ENCODE measurements at regions of chr2 and their contacts with region 1.

Region 1: GRCh38 chr2:237572021-237572741 is 5.8 kb downstream of the PRLH start:
- DNase-seq: peak; percentile 73 to 80 (median 77)
- H3K4me3 ChIP-seq: no peak overlapping the region
- H3K4me3 Mint-ChIP-seq: no peak overlapping the region
- H3K27ac ChIP-seq: no peak overlapping the region
- H3K27ac Mint-ChIP-seq: peak overlapping the region in 1 of 7 donors; percentile 53
- H3K4me1 ChIP-seq: no peaks in the 10 kb centered on the region
- H3K4me1 Mint-ChIP-seq: peaks cover 0 to 6% (median 3%) of the 10 kb centered on the region in 4 donors
- H3K27me3 ChIP-seq: no peaks in the 10 kb centered on the region
- H3K27me3 Mint-ChIP-seq: peaks cover 4 to 6% of the 10 kb centered on the region in 2 donors

Region 2: GRCh38 chr2:236343400-236344161 is 1228.6 kb before region 1 on chr2:
- CTCF ChIA-PET with region 1: no interaction called
- POLR2A ChIA-PET with region 1: no interaction called
- intact Hi-C with region 1: loop called (anchors 10 kb)
- DNase-seq: peak; percentile 41 to 60 (median 57)
- H3K4me3 ChIP-seq: no peak overlapping the region
- H3K4me3 Mint-ChIP-seq: no peak overlapping the region
- H3K27ac ChIP-seq: no peak overlapping the region
- H3K27ac Mint-ChIP-seq: no peak overlapping the region
- H3K4me1 ChIP-seq: no peaks in the 10 kb centered on the region
- H3K4me1 Mint-ChIP-seq: peaks cover 0 to 4% (median 0%) of the 10 kb centered on the region in 4 donors
- H3K27me3 ChIP-seq: no peaks in the 10 kb centered on the region
- H3K27me3 Mint-ChIP-seq: peaks cover 0 to 17% of the 10 kb centered on the region in 2 donors

Region 3: DNA sequence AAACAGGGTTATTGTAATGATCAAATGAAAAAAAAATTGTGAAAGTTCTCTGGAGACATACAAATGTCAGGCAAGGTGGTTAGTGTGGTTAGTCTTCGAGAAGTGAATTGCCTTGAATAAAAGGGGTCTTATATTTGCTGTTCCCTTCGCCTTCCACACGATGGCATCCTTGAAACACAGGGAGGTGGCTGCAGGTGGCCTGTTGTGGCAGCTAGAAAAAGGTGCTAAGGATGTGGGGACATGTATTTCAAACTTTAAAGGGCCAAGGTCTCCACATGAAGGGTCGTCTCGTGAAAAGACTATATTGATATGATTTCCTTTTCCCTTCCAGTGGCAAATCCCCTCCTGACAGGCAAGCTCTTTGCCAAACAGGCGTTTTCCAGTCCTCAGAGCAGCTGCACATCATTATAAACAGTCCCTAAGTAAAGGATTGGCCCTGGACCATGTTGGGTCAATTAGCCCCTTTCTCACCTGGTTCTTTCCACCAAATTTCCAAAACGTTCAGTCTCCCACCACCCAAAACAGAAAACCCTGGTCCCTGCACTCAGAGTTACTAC is 418.0 kb before region 1 on chr2:
- CTCF ChIA-PET with region 1: interaction called, 32 read pairs
- POLR2A ChIA-PET with region 1: no interaction called
- intact Hi-C with region 1: no loop called
- DNase-seq: peak; percentile 48 to 59 (median 57)
- H3K4me3 ChIP-seq: no peak overlapping the region
- H3K4me3 Mint-ChIP-seq: no peak overlapping the region
- H3K27ac ChIP-seq: no peak overlapping the region
- H3K27ac Mint-ChIP-seq: no peak overlapping the region
- H3K4me1 ChIP-seq: no peaks in the 10 kb centered on the region
- H3K4me1 Mint-ChIP-seq: peaks cover 0 to 5% (median 2%) of the 10 kb centered on the region in 4 donors
- H3K27me3 ChIP-seq: no peaks in the 10 kb centered on the region
- H3K27me3 Mint-ChIP-seq: peaks cover 1 to 3% of the 10 kb centered on the region in 2 donors

Region 4: DNA sequence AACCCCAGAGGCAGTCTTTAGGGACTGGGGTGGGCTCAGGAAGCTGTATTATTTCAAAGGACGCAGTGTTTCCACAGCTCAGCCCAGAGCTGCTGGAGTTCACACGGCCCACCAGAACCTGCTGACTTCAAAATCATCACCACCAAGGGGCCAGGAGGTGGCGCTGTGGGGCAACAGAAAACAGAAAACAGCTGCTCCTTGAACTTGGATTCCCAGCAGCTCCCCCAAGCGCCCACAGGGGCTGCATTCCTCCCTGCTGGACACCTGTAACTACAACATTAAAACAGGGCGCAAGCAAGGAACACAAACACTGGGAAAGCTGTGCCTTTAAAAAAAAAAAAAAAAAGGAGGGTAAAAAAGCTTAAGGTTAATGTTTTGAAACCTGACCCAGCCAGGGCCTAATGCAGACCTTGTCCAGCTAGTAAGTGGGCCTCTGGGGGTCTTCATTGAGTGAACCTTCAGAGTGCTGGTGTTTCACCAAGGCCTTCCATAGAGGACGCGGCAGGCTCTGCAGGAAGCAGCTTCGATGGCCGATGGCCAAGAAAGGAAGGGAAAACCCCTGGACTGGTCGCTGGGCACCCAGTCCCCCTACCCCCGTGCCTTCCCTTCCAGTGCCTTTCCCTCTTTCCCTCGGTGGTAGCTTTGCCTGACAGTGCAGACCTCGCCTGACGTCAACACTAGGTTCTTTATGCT is 59.3 kb before region 1 on chr2:
- CTCF ChIA-PET with region 1: interaction called, 158 read pairs
- POLR2A ChIA-PET with region 1: no interaction called
- intact Hi-C with region 1: loop called (anchors 1 kb)
- DNase-seq: peak; percentile 64 to 74 (median 70)
- H3K4me3 ChIP-seq: no peak overlapping the region
- H3K4me3 Mint-ChIP-seq: no peak overlapping the region
- H3K27ac ChIP-seq: no peak overlapping the region
- H3K27ac Mint-ChIP-seq: no peak overlapping the region
- H3K4me1 ChIP-seq: no peaks in the 10 kb centered on the region
- H3K4me1 Mint-ChIP-seq: no peaks in the 10 kb centered on the region
- H3K27me3 ChIP-seq: no peaks in the 10 kb centered on the region
- H3K27me3 Mint-ChIP-seq: peaks cover 0 to 3% of the 10 kb centered on the region in 2 donors

Region 5: DNA sequence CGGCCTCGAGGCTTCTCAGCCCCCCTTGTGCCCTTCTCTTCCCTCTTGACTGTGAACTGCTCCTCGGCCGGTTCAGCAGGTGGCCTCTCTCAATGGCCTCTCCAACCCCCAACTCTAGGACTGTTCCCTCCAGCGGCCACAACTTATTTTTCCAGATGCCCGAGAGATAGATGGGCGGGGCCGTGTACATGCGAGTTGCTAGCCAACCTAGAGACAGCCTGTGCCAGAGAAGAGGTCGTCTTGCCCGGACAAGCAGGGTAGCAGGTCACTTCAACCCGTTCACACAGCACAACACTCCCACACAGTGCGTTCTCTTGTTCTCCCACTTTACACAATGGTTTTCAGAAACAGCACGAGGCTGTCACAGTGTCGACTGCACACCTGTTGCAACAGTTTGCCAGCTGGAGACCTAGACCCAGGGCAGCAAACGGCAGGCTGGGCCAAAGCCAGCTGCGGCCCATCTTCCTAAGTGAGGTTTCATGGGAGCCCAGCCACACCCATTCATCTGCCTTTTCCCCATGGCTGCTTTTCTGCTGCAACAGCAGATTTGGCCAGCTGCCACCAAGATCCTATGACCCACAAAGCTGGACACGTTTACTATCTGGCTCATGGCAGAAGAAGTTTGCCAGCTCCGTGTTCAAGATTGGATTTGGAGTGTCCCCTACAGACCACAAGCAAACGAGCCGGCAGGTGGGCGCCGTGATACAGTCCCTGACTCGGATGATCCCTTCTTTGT is 13.1 kb before region 1 on chr2:
- CTCF ChIA-PET with region 1: interaction called, 20 read pairs
- POLR2A ChIA-PET with region 1: no interaction called
- intact Hi-C with region 1: no loop called
- DNase-seq: no peak
- H3K4me3 ChIP-seq: no peak overlapping the region
- H3K4me3 Mint-ChIP-seq: no peak overlapping the region
- H3K27ac ChIP-seq: no peak overlapping the region
- H3K27ac Mint-ChIP-seq: peak overlapping the region in 2 of 7 donors; percentile 42 to 55
- H3K4me1 ChIP-seq: peaks cover 5% of the 10 kb centered on the region
- H3K4me1 Mint-ChIP-seq: peaks cover 10 to 12% (median 11%) of the 10 kb centered on the region in 4 donors
- H3K27me3 ChIP-seq: no peaks in the 10 kb centered on the region
- H3K27me3 Mint-ChIP-seq: peaks cover 6 to 11% of the 10 kb centered on the region in 2 donors

Region 6: DNA sequence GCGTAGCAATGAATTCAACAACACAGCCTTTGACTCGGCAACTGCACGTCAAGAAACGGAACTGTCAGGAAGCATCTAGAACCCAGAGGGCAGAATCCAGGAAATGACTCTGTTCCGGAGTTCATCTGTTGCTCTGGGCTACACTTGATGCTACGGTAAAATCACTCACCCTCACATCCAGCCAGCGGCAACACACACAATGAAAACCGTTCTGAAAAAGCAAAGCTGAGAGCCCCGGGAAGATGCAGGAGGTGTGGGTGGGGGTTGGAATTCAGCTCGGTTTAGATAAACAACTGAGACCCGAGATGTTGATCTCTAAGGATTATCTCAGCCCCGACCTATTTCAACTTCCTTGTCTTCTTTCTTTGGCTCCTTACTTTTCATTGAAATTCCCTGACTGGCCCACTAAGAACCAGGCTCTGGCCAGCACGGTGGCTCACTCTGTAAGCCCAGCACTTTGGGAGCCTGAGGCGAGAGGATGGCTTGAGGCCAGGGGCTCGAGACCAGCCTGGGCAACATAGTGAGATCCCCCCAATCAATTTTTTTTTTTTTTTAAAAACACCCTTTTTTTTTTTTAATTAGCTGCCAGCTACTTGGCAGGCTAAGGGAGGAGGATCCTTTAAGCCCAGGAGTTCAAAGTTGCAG is 31.7 kb after region 1 on chr2:
- CTCF ChIA-PET with region 1: interaction called, 22 read pairs
- POLR2A ChIA-PET with region 1: no interaction called
- intact Hi-C with region 1: no loop called
- DNase-seq: peak; percentile 78 to 84 (median 81)
- H3K4me3 ChIP-seq: peak overlapping the region; percentile 11 to 12
- H3K4me3 Mint-ChIP-seq: peak overlapping the region; percentile 39 to 85 (median 80)
- H3K27ac ChIP-seq: peak overlapping the region; percentile 53
- H3K27ac Mint-ChIP-seq: peak overlapping the region; percentile 76 to 99 (median 96)
- H3K4me1 ChIP-seq: peaks cover 21% of the 10 kb centered on the region
- H3K4me1 Mint-ChIP-seq: peaks cover 17 to 33% (median 23%) of the 10 kb centered on the region in 4 donors
- H3K27me3 ChIP-seq: no peaks in the 10 kb centered on the region
- H3K27me3 Mint-ChIP-seq: no peaks in the 10 kb centered on the region

Region 7: GRCh38 chr2:237886685-237887481 is 314.7 kb after region 1 on chr2:
- CTCF ChIA-PET with region 1: no interaction called
- POLR2A ChIA-PET with region 1: no interaction called
- intact Hi-C with region 1: no loop called
- DNase-seq: no peak
- H3K4me3 ChIP-seq: no peak overlapping the region
- H3K4me3 Mint-ChIP-seq: no peak overlapping the region
- H3K27ac ChIP-seq: no peak overlapping the region
- H3K27ac Mint-ChIP-seq: no peak overlapping the region
- H3K4me1 ChIP-seq: no peaks in the 10 kb centered on the region
- H3K4me1 Mint-ChIP-seq: peaks cover 0 to 6% (median 2%) of the 10 kb centered on the region in 4 donors
- H3K27me3 ChIP-seq: no peaks in the 10 kb centered on the region
- H3K27me3 Mint-ChIP-seq: no peaks in the 10 kb centered on the region

Region 8: DNA sequence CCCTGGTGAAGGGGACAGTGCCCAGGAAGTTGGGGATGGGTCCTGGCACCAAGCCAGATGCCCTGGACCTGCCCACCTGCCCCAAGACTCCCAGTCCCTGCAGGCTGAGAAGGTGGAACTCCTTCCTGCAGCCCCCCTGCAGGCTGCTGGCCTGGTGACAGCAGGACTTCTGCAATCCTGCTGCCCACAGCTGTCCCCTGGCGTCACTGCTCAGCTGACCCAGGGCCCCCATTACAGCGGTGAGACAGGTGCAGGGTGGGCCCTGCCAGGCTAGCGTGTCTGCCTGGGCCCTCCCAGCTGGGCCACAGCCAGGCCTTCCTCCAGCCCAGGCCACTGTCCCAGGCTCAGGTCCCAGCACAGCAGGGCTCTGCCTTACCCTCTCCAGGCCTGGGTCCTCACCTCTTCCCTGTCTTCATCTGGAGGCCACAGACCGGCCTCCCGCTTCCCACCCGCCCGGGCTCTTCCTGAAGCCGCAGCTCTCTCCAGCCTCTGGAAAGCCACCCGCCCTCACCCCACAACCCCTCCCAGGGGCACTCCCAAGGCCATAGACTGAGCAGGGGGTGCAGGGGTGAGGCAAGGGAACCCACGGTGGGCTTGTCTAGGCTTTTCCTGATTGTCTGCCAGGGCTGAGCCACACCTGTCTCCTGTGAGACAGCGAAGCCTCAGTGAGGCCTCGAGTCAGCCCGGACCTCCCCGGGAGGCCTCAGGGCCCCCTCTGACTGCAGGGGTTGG is 577.8 kb after region 1 on chr2:
- CTCF ChIA-PET with region 1: no interaction called
- POLR2A ChIA-PET with region 1: no interaction called
- intact Hi-C with region 1: loop called (anchors 5 kb)
- DNase-seq: no peak
- H3K4me3 ChIP-seq: no peak overlapping the region
- H3K4me3 Mint-ChIP-seq: no peak overlapping the region
- H3K27ac ChIP-seq: no peak overlapping the region
- H3K27ac Mint-ChIP-seq: no peak overlapping the region
- H3K4me1 ChIP-seq: no peaks in the 10 kb centered on the region
- H3K4me1 Mint-ChIP-seq: no peaks in the 10 kb centered on the region
- H3K27me3 ChIP-seq: no peaks in the 10 kb centered on the region
- H3K27me3 Mint-ChIP-seq: no peaks in the 10 kb centered on the region